ENCODE measurements at regions of chr3 and their contacts with region 1.

Region 1: DNA sequence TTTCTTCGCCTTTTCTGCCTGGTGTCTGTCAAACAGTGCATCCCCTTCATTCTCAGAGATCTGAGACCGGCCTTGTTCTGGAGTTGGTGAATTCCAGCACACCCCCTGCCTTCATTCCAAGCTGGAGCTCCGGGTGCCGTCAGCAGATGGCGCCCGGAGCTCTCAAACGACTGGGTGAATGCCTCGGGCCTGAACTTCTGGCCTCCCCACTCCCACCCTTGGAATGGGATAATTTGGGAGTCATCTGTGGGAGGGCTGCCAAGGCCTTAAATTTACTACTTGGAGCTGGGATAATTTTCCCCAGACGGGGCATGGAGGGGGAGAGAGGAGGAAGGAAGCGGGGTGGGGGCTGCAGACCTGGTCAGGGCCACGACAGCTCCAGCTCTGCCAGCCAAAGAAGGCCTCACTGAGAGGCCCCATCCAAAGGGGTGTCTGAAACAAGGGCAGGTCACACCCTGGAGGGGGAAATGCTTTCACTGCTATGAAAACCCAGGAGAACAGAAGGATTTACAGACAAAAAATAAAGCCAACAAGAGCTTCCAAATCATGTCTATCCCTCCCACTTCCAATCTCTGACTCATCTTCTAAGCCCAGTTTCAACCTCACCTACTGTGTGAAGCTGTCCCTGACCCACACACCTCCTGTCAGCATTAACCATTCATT is 187.9 kb downstream of the OPA1 start:
- DNase-seq: peak; percentile 89 to 96
- H3K4me3 ChIP-seq: no peak overlapping the region
- H3K27ac ChIP-seq: peak overlapping the region; percentile 98
- H3K4me1 ChIP-seq: peaks cover 59% of the 10 kb centered on the region
- H3K27me3 ChIP-seq: no peaks in the 10 kb centered on the region
- CTCF ChIP-seq: peak; percentile 99

Region 2: GRCh38 chr3:193816590-193817311 is 35.8 kb after region 1 on chr3:
- CTCF ChIA-PET with region 1: interaction called, 4 read pairs
- POLR2A ChIA-PET with region 1: interaction called, 3 read pairs
- intact Hi-C with region 1: loop called (anchors 1 kb)
- DNase-seq: peak; percentile 94 to 97
- H3K4me3 ChIP-seq: no peak overlapping the region; the same call in 1 of the 2 replicates
- H3K27ac ChIP-seq: peak overlapping the region; percentile 47
- H3K4me1 ChIP-seq: peaks cover 67% of the 10 kb centered on the region
- H3K27me3 ChIP-seq: no peaks in the 10 kb centered on the region
- CTCF ChIP-seq: no peak

Region 3: DNA sequence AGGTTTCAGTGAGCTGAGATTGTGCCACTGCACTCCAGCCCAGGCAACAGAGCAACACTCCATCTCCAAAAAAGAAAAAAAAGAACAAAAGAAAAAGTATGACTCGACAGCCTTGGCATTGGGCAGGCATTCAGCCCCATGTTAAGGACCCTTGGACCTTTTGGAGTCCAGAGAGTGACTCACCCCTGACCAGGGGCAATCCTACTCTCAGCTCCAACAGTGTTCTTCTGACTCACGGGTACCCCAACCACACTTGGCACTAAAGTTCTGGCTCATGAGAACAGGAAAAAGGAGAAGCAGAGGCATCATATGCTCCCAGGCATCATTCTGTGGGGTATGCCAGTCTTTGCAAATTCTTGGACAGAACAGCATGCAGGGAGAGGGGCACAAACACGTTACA is 102.6 kb after region 1 on chr3:
- CTCF ChIA-PET with region 1: no interaction called
- POLR2A ChIA-PET with region 1: interaction called, 12 read pairs
- intact Hi-C with region 1: loop called (anchors 1 kb)
- DNase-seq: peak; percentile 58 to 85
- H3K4me3 ChIP-seq: no peak overlapping the region
- H3K27ac ChIP-seq: peak overlapping the region; percentile 81
- H3K4me1 ChIP-seq: peaks cover 88% of the 10 kb centered on the region
- H3K27me3 ChIP-seq: no peaks in the 10 kb centered on the region
- CTCF ChIP-seq: no peak

Region 4: DNA sequence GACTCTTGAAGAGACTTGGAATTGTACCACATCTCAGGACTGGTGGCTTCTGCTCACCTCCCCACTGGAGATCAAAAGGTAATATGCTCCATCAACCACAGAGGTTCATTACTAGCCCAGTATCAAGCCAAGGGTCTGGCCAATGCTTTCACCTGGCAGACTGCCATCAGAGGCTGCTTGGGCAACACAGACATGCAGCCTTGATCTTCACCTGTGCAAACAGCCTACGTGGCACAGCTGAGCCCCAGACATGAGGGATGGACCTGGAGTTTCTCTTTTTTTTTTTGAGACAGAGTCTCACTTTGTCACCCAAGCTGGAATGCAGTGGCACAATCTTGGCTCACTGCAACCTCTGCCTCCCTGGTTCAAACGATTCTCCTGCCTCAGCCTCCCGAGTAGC is 249.4 kb after region 1 on chr3:
- CTCF ChIA-PET with region 1: no interaction called
- POLR2A ChIA-PET with region 1: no interaction called
- intact Hi-C with region 1: no loop called
- DNase-seq: peak; percentile 69 to 88
- H3K4me3 ChIP-seq: no peak overlapping the region
- H3K27ac ChIP-seq: peak overlapping the region; percentile 40
- H3K4me1 ChIP-seq: peaks cover 53% of the 10 kb centered on the region
- H3K27me3 ChIP-seq: no peaks in the 10 kb centered on the region
- CTCF ChIP-seq: no peak

Region 5: GRCh38 chr3:194070634-194071409 is 289.9 kb after region 1 on chr3:
- CTCF ChIA-PET with region 1: no interaction called
- POLR2A ChIA-PET with region 1: no interaction called
- intact Hi-C with region 1: loop called (anchors 1 kb)
- DNase-seq: peak; percentile 92 to 97
- H3K4me3 ChIP-seq: peak overlapping the region; percentile 59; the same call in 1 of the 2 replicates
- H3K27ac ChIP-seq: peak overlapping the region; percentile 74
- H3K4me1 ChIP-seq: peaks cover 47% of the 10 kb centered on the region
- H3K27me3 ChIP-seq: no peaks in the 10 kb centered on the region
- CTCF ChIP-seq: no peak

Region 6: GRCh38 chr3:194204042-194204987 is 423.4 kb after region 1 on chr3:
- CTCF ChIA-PET with region 1: interaction called, 3 read pairs
- POLR2A ChIA-PET with region 1: interaction called, 6 read pairs
- intact Hi-C with region 1: loop called (anchors 2 kb)
- DNase-seq: peak; percentile 62 to 78
- H3K4me3 ChIP-seq: peak overlapping the region; percentile 58
- H3K27ac ChIP-seq: peak overlapping the region; percentile 71
- H3K4me1 ChIP-seq: peaks cover 47% of the 10 kb centered on the region
- H3K27me3 ChIP-seq: no peaks in the 10 kb centered on the region
- CTCF ChIP-seq: no peak

Region 7: GRCh38 chr3:194315088-194315964 is 534.4 kb after region 1 on chr3:
- CTCF ChIA-PET with region 1: interaction called, 23 read pairs
- POLR2A ChIA-PET with region 1: no interaction called
- intact Hi-C with region 1: loop called (anchors 1 kb)
- DNase-seq: peak; percentile 91 to 97
- H3K4me3 ChIP-seq: peak overlapping the region; percentile 51
- H3K27ac ChIP-seq: peak overlapping the region; percentile 75
- H3K4me1 ChIP-seq: peaks cover 27% of the 10 kb centered on the region
- H3K27me3 ChIP-seq: no peaks in the 10 kb centered on the region
- CTCF ChIP-seq: peak; percentile 99

Measured in PC-9 (cell line).